Activated B cell treated with CpG ODN at 0.5 μM for 24 hours (primary cell): ENCODE measurements at regions of chrX and their contacts with region 1.

Region 1: GRCh38 chrX:150365051-150365989 is 2.2 kb downstream of the MAMLD1 start:
- DNase-seq: peak; percentile 23
- ATAC-seq: peak; percentile 10
- H3K4me3 Mint-ChIP-seq: peak overlapping the region; percentile 84
- H3K27ac Mint-ChIP-seq: no peak overlapping the region
- H3K4me1 Mint-ChIP-seq: peaks cover 27% of the 10 kb centered on the region
- H3K27me3 Mint-ChIP-seq: peaks cover 4% of the 10 kb centered on the region
- CTCF ChIP-seq: no peak

Region 2: DNA sequence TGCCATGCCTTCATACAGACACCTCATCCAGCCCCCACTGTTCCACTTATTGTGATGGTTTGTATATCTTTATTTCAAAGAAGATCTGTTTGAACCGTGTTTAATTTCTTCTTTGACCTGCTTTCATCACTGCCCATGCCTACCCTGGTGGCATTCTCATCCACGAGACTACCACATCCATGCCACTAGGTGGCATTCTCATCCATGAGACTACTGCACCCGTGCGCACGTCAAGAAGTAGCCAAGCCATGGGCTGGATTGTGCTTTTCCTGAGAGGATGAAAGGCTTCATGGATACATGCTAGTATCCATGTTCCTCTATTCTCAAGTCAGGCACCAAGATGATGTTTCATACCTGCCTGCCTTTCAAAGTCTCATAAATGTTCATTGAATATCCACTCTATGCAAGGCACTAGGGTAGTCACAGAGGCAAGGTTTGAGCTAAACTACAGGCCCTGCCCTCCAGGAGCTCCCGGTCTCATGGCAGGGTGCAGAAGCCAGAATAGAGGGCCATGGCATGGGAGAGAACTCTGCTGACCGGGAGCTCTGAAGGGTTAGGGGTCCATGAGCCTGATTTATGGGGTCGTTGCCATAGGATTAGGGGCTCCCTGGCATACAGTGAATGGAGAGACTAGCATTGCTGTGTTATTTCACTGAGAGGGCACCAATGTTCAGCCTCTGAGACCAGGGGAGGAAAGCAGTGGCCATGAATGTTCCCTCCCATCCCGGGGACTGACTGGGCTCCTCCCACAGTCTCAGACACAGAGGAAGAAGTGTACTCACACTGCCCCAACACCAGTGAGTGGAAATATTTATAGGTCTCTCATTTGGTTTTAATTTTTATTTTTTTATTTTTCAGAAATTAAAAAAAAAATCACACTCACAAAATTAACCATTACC is 402.2 kb before region 1 on chrX:
- CTCF ChIA-PET with region 1: no interaction called
- POLR2A ChIA-PET with region 1: no interaction called
- intact Hi-C with region 1: loop called (anchors 5 kb)
- DNase-seq: no peak
- ATAC-seq: peak; percentile 54
- H3K4me3 Mint-ChIP-seq: no peak overlapping the region
- H3K27ac Mint-ChIP-seq: no peak overlapping the region
- H3K4me1 Mint-ChIP-seq: no peaks in the 10 kb centered on the region
- H3K27me3 Mint-ChIP-seq: no peaks in the 10 kb centered on the region
- CTCF ChIP-seq: no peak

Region 3: DNA sequence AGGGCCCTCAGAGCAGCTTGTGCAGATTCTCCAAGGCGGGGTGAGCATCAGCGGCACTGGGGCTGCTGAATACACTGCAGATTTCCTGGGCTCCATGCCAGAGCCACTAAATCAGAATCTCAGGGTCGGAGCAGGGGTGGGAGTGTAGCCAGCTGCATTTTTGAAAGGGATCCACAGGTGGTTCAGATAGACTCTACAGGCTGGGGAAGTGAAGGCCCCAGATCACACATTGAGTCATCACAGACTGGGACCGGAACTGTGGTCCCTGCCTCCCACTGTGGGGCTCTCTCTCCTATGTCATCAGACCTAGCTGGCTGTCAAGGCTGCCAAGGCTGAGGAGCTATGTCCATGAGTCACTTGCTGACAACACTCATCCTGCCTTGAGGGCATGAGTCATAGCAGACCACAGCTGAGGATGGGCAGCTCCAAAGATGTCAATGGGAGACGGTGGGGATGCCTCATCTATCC is 164.5 kb before region 1 on chrX:
- CTCF ChIA-PET with region 1: no interaction called
- POLR2A ChIA-PET with region 1: interaction called, 3 read pairs
- intact Hi-C with region 1: loop called (anchors 10 kb)
- DNase-seq: peak; percentile 15
- ATAC-seq: peak; percentile 94
- H3K4me3 Mint-ChIP-seq: no peak overlapping the region
- H3K27ac Mint-ChIP-seq: no peak overlapping the region
- H3K4me1 Mint-ChIP-seq: peaks cover 10% of the 10 kb centered on the region
- H3K27me3 Mint-ChIP-seq: no peaks in the 10 kb centered on the region
- CTCF ChIP-seq: no peak

Region 4: GRCh38 chrX:150547375-150548115 is 182.2 kb after region 1 on chrX:
- CTCF ChIA-PET with region 1: no interaction called
- POLR2A ChIA-PET with region 1: no interaction called
- intact Hi-C with region 1: loop called (anchors 5 kb)
- DNase-seq: peak; percentile 32
- ATAC-seq: peak; percentile 57
- H3K4me3 Mint-ChIP-seq: peak overlapping the region; percentile 77
- H3K27ac Mint-ChIP-seq: peak overlapping the region; percentile 66
- H3K4me1 Mint-ChIP-seq: peaks cover 33% of the 10 kb centered on the region
- H3K27me3 Mint-ChIP-seq: no peaks in the 10 kb centered on the region
- CTCF ChIP-seq: no peak

Region 5: DNA sequence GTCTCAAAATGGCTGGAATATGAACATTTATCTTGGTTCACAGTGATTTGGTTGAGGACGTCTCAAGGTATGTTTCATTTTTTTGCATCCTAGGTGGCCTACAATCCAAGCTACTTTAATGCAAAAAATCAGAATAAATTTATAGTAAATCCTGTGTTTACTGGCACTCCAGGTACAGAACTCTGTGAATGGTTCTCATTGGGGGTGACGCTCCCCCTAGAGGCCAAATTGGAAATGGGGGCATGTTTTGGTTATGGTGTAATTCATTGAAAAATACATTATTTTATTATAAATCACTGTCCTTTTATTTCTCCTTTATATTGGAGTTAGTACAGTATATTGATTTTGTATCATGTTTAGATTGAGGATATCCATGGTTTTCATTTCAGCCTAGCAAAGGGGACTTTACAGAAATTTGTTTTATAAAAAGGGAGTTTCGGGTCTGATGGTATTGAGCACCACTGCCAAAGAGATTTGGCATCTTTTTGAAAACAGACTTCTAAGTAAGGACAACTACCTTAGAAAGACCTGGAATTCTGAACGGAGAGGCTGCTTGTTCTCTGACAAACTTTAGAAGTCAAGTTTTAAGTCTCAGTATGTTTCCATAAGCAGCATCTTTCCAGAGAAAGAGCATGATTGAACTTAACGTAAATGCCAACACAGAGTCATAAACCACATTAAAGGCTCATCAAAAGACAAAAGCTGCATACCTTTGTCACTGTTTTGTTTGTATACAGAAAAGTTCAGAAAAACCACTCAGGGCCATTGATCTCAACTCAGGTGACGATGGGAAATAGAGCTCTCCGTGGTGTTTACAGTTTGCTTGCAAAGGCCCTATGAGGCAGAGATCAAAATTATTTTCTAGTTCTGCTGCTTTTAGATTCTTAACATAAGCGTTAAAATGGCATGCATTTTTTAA is 222.5 kb after region 1 on chrX:
- CTCF ChIA-PET with region 1: no interaction called
- POLR2A ChIA-PET with region 1: no interaction called
- intact Hi-C with region 1: loop called (anchors 5 kb)
- DNase-seq: no peak
- ATAC-seq: no peak
- H3K4me3 Mint-ChIP-seq: no peak overlapping the region
- H3K27ac Mint-ChIP-seq: no peak overlapping the region
- H3K4me1 Mint-ChIP-seq: peaks cover 10% of the 10 kb centered on the region
- H3K27me3 Mint-ChIP-seq: no peaks in the 10 kb centered on the region
- CTCF ChIP-seq: no peak

Region 6: DNA sequence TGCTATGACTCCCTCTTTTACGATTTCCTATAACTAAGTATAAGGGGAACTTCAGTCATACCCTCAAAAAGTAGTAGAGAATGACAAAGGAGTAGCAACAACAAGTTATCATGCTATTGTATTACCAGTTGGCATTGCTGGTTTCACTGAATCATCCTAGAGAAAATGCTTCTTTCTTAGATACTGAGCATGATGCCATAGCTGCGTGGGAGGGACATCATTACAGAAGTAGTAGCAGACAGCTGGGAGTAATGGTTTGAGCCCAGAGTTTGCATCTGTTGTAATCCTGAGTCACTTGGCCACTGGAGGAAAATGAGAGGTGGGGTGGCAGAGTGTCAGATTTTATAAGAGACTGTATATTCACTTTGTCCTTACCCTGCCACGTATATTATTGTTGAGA is 366.5 kb after region 1 on chrX:
- CTCF ChIA-PET with region 1: no interaction called
- POLR2A ChIA-PET with region 1: no interaction called
- intact Hi-C with region 1: loop called (anchors 10 kb)
- DNase-seq: no peak
- ATAC-seq: no peak
- H3K4me3 Mint-ChIP-seq: no peak overlapping the region
- H3K27ac Mint-ChIP-seq: no peak overlapping the region
- H3K4me1 Mint-ChIP-seq: peaks cover 18% of the 10 kb centered on the region
- H3K27me3 Mint-ChIP-seq: no peaks in the 10 kb centered on the region
- CTCF ChIP-seq: no peak